CD14-positive monocyte (primary cell): ENCODE measurements at regions of chr1 and their contacts with region 1.

Region 1: GRCh38 chr1:169207797-169208520 is 101.5 kb downstream of the ATP1B1 start:
- DNase-seq: no peak
- H3K4me3 ChIP-seq: no peak overlapping the region
- H3K4me3 Mint-ChIP-seq: no peak overlapping the region
- H3K27ac ChIP-seq: no peak overlapping the region
- H3K27ac Mint-ChIP-seq: no peak overlapping the region
- H3K4me1 ChIP-seq: no peaks in the 10 kb centered on the region
- H3K4me1 Mint-ChIP-seq: peaks cover 3% of the 10 kb centered on the region
- H3K27me3 ChIP-seq: no peaks in the 10 kb centered on the region
- H3K27me3 Mint-ChIP-seq: no peaks in the 10 kb centered on the region
- CTCF ChIP-seq: no peak

Region 2: GRCh38 chr1:169186106-169186505 is 21.9 kb before region 1 on chr1:
- intact Hi-C with region 1: loop called in 1 of 2 experiments (anchors 2 kb)
- DNase-seq: no peak
- H3K4me3 ChIP-seq: no peak overlapping the region
- H3K4me3 Mint-ChIP-seq: no peak overlapping the region
- H3K27ac ChIP-seq: no peak overlapping the region
- H3K27ac Mint-ChIP-seq: no peak overlapping the region
- H3K4me1 ChIP-seq: no peaks in the 10 kb centered on the region
- H3K4me1 Mint-ChIP-seq: no peaks in the 10 kb centered on the region
- H3K27me3 ChIP-seq: no peaks in the 10 kb centered on the region
- H3K27me3 Mint-ChIP-seq: no peaks in the 10 kb centered on the region
- CTCF ChIP-seq: no peak